ENCODE measurements at regions of chr14 and their contacts with region 1.

Region 1: GRCh38 chr14:69535230-69535848 is 39.3 kb downstream of the CCDC177 start:
- DNase-seq: peak; percentile 26
- H3K4me3 ChIP-seq: no peak overlapping the region
- H3K27ac ChIP-seq: no peak overlapping the region
- H3K27me3 ChIP-seq: peaks cover 42% of the 10 kb centered on the region
- CTCF ChIP-seq: peak; percentile 87

Region 2: DNA sequence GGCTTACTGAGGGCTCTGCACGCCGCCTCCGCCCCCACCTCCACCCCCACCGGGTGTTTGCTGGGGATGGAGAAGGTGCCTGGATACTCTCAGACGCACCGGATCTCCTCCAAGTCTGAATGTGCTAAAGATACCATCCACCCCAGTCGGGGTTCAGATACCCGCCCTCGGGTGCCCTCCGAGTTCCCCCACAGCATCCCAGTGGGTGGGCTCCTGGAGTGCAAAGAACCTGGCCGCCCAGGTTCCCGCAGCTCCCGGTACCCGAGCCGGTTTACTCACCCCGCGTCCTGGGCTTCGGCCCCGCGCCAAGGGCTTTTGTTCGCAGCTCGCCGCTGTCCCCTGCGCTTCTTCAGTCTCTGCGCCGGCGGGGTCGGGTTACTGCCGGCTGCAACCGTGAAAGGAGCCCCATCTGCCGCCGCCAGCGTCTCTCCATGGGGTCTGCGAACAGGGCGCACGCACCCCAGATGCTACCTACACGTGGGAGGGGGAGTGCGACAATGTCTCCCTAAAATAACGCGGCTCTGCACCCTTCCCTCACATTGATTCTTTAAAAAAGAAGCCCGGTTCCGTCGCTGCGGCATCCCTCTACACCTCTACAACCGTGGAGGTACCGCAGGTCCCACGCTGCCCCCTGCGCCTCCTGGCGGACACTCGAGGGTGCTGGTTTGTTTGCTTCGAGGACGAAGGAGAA is 39.1 kb after region 1 on chr14 and contains the start of gene CCDC177:
- CTCF ChIA-PET with region 1: interaction called, 20 read pairs
- POLR2A ChIA-PET with region 1: no interaction called
- DNase-seq: no peak
- H3K4me3 ChIP-seq: peak within 1 kb of the TSS; percentile 46
- H3K27ac ChIP-seq: no peak within 1 kb of the TSS
- H3K27me3 ChIP-seq: peaks cover 67% of the 10 kb centered on the region
- CTCF ChIP-seq: peak; percentile 97
- polyA plus RNA-seq, gene CCDC177: not detected in 2 replicates

Region 3: DNA sequence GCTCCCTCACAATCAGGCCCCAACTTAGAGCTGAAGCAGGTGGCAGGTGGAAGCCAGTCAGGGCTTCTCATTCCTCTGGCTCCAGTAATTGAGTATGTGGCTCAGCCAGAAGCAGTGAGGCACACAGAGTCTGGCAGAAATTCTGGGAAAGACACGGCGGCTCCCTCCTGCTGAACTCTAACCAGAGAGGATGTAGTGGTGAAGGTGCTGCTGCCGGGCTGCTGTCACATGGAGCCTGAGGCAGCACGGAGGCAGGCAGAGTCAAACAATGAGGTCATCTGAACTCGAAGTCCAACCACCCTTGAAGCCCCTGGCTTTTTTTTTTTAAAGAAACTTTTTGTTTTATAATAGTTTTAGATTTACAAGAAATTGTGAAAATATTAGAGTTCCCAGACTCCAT is 310.4 kb after region 1 on chr14:
- CTCF ChIA-PET with region 1: no interaction called
- POLR2A ChIA-PET with region 1: no interaction called
- DNase-seq: no peak
- H3K4me3 ChIP-seq: no peak overlapping the region
- H3K27ac ChIP-seq: no peak overlapping the region
- H3K27me3 ChIP-seq: peaks cover 28% of the 10 kb centered on the region
- CTCF ChIP-seq: no peak

Measured in AG04450 (cell line).